ENCODE measurements at regions of chrX and their contacts with region 1.

Region 1: GRCh38 chrX:129982274-129983251 is at the start of gene BCORL1:
- DNase-seq: peak; percentile 68 to 87 (median 79)
- H3K4me3 ChIP-seq: peak within 1 kb of the TSS in 1 of 3 experiments; percentile 71
- H3K4me3 Mint-ChIP-seq: no peak within 1 kb of the TSS
- H3K27ac ChIP-seq: peak within 1 kb of the TSS; percentile 48 to 49
- H3K27ac Mint-ChIP-seq: peak within 1 kb of the TSS in 6 of 7 donors; percentile 48 to 88 (median 80)
- H3K4me1 ChIP-seq: peaks cover 11 to 15% of the 10 kb centered on the region in 2 donors
- H3K4me1 Mint-ChIP-seq: peaks cover 24% of the 10 kb centered on the region
- H3K27me3 ChIP-seq: no peaks in the 10 kb centered on the region
- H3K27me3 Mint-ChIP-seq: peaks cover 4 to 17% (median 7%) of the 10 kb centered on the region in 3 donors
- CTCF ChIP-seq: no peak
- polyA plus RNA-seq, gene BCORL1: 0.69 to 2.4 (median 0.72) TPM

Region 2: DNA sequence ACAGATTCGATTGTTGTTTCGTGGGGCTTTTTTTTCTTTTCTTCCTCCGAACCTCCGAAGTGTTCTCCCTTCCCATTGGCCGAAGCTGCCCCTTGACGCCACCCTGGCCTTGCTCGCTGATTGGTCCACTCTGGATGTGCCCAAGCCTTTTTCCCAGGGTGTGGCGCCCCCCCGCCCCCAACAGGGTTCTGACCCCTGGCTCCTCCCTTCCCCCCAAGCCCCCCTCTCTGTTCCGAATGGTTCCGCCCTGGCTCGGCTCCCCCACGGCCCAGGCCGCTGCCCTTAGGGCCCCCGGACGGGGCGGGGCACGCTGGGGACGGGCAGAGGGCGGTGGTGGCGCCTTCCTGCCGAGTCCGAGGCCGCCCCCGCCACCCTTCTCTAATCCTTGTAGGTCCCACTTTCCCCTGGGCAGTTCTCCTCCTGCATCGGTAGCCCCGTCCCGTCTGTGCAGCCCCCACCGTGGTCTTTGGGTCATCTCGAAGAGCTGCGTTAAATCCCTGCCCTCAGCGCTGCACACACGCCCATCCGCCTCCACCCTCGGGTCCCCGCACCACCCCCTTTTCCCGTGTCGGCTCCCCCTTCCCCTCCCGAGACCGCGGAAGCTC is 51.0 kb before region 1 on chrX:
- intact Hi-C with region 1: loop called (anchors 2 kb)
- DNase-seq: peak; percentile 80 to 94 (median 92)
- H3K4me3 ChIP-seq: peak overlapping the region; percentile 77 to 78 (median 78)
- H3K4me3 Mint-ChIP-seq: peak overlapping the region; percentile 80 to 89
- H3K27ac ChIP-seq: peak overlapping the region; percentile 84
- H3K27ac Mint-ChIP-seq: peak overlapping the region; percentile 88 to 97 (median 93)
- H3K4me1 ChIP-seq: peaks cover 4 to 10% of the 10 kb centered on the region in 2 donors
- H3K4me1 Mint-ChIP-seq: peaks cover 12% of the 10 kb centered on the region
- H3K27me3 ChIP-seq: peaks cover 0 to 8% of the 10 kb centered on the region in 2 donors
- H3K27me3 Mint-ChIP-seq: peaks cover 13 to 16% (median 14%) of the 10 kb centered on the region in 3 donors
- CTCF ChIP-seq: no peak

Region 3: GRCh38 chrX:129945146-129945545 is 37.4 kb before region 1 on chrX:
- intact Hi-C with region 1: no loop called
- DNase-seq: no peak
- H3K4me3 ChIP-seq: no peak overlapping the region
- H3K4me3 Mint-ChIP-seq: no peak overlapping the region
- H3K27ac ChIP-seq: no peak overlapping the region
- H3K27ac Mint-ChIP-seq: no peak overlapping the region
- H3K4me1 ChIP-seq: no peaks in the 10 kb centered on the region
- H3K4me1 Mint-ChIP-seq: no peaks in the 10 kb centered on the region
- H3K27me3 ChIP-seq: peaks cover 0 to 2% of the 10 kb centered on the region in 2 donors
- H3K27me3 Mint-ChIP-seq: peaks cover 0 to 1% (median 0%) of the 10 kb centered on the region in 3 donors
- CTCF ChIP-seq: no peak

Measured in CD14-positive monocyte (primary cell).